Activated CD8-positive, alpha-beta T cell treated with anti-CD3 and anti-CD28 coated beads for 36 hours (primary cell): ENCODE measurements at regions of chr16 and their contacts with region 1.

Region 1: DNA sequence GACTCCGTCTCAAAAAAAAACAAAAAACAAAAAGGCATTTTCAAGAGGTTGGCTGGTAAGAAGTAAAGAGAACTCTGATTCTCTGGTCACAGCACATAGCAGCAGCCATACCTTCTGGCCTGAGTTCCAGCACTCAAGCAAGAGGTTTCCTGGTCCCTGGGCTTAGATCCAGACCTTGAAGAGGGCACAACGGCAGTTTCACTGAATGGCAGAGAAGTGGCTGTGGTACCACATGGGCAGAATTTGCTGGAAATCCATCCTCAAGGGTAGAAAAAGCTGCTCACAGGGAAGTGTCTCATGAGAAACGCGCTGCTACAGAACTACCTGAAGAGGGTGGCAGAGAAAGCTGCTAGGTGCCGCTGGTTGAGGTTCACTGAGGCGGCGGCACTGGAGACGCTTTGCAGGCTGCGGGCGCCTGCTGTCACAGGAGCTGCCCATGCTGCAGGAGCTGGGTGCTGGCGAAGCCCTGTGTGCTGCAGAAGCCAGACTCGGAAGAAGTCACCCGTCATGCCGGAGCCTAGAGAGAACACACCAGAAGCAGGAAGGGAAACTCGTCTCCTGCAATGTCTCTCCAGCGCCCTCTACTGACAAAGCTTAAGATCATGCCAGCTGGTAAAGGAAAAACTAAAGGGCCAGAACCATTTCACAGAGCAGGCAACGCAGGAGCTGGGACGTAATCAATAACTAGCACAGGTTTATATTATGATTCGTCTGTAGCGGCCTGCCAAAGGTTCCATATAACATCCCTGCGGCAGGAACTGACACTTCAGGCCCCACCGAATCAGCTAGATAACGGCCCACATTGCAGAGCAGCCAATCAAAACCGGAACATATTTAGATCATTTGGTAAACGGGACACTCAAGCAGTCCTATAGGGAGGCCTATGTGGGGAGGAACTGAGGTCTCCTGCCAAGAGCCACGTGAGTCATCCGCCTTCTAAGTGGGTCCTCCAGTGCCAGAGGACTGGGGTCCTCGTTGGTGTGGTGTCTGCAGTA is 5.4 kb upstream of the ZNF213 start:
- DNase-seq: peak; percentile 79
- ATAC-seq: peak; percentile 77
- H3K4me3 Mint-ChIP-seq: peak overlapping the region; percentile 85
- H3K27ac Mint-ChIP-seq: peak overlapping the region; percentile 86
- H3K4me1 Mint-ChIP-seq: peaks cover 42% of the 10 kb centered on the region
- H3K27me3 Mint-ChIP-seq: no peaks in the 10 kb centered on the region
- CTCF ChIP-seq: peak; percentile 96

Region 2: GRCh38 chr16:3045357-3045728 is 84.1 kb before region 1 on chr16:
- CTCF ChIA-PET with region 1: interaction called, 16 read pairs
- POLR2A ChIA-PET with region 1: interaction called, 3 read pairs
- intact Hi-C with region 1: no loop called
- DNase-seq: peak; percentile 60
- ATAC-seq: peak; percentile 60
- H3K4me3 Mint-ChIP-seq: peak overlapping the region; percentile 69
- H3K27ac Mint-ChIP-seq: peak overlapping the region; percentile 15
- H3K4me1 Mint-ChIP-seq: peaks cover 15% of the 10 kb centered on the region
- H3K27me3 Mint-ChIP-seq: peaks cover 38% of the 10 kb centered on the region
- CTCF ChIP-seq: no peak

Region 3: DNA sequence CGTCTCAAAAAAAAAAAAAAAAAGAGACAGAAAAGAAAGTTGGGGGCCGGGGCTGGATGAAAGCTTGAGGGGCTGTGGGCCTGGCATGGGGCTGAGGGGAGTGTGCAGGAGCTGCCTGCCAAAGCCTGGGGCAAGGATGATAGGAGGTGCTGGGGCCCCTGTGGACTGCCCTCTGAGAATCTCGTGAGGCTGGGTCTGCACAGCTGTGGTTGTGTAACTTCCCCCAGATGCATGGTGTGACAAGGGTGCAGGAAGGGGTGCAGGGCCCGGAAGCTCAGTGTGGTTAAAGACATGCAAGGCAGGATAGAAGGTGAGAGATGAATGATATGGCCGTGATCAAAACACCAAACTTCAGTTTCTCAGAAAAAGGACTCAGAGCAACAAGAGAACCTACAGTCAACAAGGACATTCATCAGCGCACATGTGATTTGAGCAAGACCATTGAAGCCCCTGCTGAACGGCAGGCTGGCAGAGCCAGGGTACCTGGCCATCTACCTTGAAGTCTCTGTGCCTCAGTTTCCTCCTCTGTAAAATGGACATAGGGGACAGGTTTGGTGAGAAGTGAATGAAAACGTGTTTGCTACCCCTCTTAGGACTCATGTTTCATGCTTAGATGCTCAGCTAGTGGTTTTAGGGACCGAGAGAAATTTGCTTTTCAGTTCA is 54.4 kb before region 1 on chr16:
- CTCF ChIA-PET with region 1: interaction called, 20 read pairs
- POLR2A ChIA-PET with region 1: interaction called, 4 read pairs
- intact Hi-C with region 1: no loop called
- DNase-seq: peak; percentile 93
- ATAC-seq: peak; percentile 75
- H3K4me3 Mint-ChIP-seq: peak overlapping the region; percentile 60
- H3K27ac Mint-ChIP-seq: peak overlapping the region; percentile 97
- H3K4me1 Mint-ChIP-seq: peaks cover 75% of the 10 kb centered on the region
- H3K27me3 Mint-ChIP-seq: no peaks in the 10 kb centered on the region
- CTCF ChIP-seq: no peak

Region 4: GRCh38 chr16:3143612-3144320 is 14.3 kb after region 1 on chr16:
- CTCF ChIA-PET with region 1: interaction called, 33 read pairs
- POLR2A ChIA-PET with region 1: interaction called, 25 read pairs
- intact Hi-C with region 1: no loop called
- DNase-seq: no peak
- ATAC-seq: no peak
- H3K4me3 Mint-ChIP-seq: no peak overlapping the region
- H3K27ac Mint-ChIP-seq: no peak overlapping the region
- H3K4me1 Mint-ChIP-seq: no peaks in the 10 kb centered on the region
- H3K27me3 Mint-ChIP-seq: no peaks in the 10 kb centered on the region
- CTCF ChIP-seq: no peak

Region 5: GRCh38 chr16:3165111-3165822 is 35.8 kb after region 1 on chr16:
- CTCF ChIA-PET with region 1: interaction called, 23 read pairs
- POLR2A ChIA-PET with region 1: interaction called, 9 read pairs
- intact Hi-C with region 1: no loop called
- DNase-seq: no peak
- ATAC-seq: no peak
- H3K4me3 Mint-ChIP-seq: peak overlapping the region; percentile 45
- H3K27ac Mint-ChIP-seq: peak overlapping the region; percentile 71
- H3K4me1 Mint-ChIP-seq: peaks cover 18% of the 10 kb centered on the region
- H3K27me3 Mint-ChIP-seq: peaks cover 10% of the 10 kb centered on the region
- CTCF ChIP-seq: no peak